ENCODE measurements at regions of chr1 and their contacts with region 1.

Region 1: DNA sequence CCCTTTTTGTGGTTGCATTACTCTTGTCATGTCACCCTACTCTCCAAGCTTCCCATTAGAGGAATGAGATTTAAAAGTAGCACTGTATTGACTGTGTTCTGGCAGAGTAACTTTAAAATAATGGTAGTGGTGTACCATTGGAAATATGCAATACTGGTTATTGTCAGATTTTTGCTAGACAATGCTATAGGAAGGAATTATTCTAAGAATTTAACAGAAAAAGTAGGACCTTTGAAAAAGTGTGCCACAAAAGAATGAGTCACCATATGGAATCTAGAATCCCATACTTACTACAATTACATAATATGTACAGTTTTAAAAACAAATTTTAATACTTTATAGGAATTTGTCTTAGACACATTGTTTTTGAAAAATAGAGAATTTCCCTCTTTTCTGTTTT is 13.8 kb downstream of the MIER1 start:
- DNase-seq: no peak

Region 2: GRCh38 chr1:66924756-66925557 is 13.7 kb before region 1 on chr1 and contains the starts of genes DNAI4 and MIER1:
- CTCF ChIA-PET with region 1: interaction called, 3 read pairs
- POLR2A ChIA-PET with region 1: interaction called, 10 read pairs
- DNase-seq: peak; percentile 99

Measured in HEK293T (cell line).